Calu3 (cell line): ENCODE measurements at regions of chr3 and their contacts with region 1.

Region 1: DNA sequence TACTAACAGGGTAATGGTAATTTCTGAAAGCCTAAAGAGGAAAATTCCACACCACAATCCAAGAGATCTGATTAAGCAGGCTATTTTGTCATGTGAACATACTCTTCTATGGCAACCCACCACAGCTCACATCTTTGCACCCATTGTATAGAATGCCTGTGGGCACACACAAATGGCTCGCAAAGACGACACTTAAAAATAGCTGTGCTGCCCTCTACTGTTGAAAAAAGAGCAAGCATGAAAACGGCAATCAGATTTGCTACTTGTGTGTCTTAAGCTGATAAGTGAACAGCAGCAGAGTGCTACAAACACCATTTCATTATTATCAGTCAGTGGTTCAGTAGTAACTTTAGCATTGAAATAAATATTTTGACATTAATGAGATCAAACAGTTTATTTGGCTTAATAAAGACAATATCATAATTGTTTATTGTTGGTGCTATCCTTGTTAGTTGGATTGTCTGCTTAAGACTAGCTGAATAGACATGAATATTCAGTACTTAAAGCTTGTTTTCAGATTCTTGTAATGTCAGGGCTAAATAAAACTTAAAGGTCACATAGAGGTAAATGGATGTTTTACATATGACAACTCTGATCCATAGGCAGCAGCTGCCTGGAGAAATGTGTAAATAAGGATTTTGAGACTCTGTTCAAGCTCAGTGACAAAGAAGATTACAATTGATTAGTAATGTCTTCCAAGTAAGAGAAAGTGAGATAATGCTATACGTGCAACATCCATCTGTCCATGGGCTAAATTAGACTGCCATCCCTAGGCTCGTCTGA is 199.1 kb downstream of the LRRN1 start:
- DNase-seq: peak; percentile 38
- H3K4me3 Mint-ChIP-seq: no peak overlapping the region
- H3K27ac Mint-ChIP-seq: no peak overlapping the region
- H3K4me1 Mint-ChIP-seq: no peaks in the 10 kb centered on the region
- H3K27me3 Mint-ChIP-seq: no peaks in the 10 kb centered on the region
- CTCF ChIP-seq: peak; percentile 23

Region 2: DNA sequence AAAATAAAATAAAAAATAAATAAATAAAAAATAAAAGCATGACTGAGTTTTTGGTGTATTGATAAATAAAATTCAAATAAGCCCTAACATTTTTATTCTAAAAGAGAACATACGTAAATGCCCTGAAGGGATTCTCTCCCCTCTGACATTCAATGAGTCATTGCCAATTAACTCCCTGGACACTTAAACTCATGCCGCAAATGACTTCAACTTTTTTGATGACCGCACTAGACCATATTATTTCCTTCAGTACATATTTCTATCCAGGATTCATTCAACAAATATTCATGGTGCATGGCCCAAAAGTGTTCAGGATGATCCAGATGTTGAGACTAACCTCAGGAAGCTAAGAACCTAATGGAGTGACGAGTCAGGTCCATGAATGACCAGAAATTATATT is 395.0 kb before region 1 on chr3:
- CTCF ChIA-PET with region 1: interaction called, 12 read pairs
- intact Hi-C with region 1: loop called (anchors 1 kb)
- DNase-seq: no peak
- H3K4me3 Mint-ChIP-seq: no peak overlapping the region
- H3K27ac Mint-ChIP-seq: no peak overlapping the region
- H3K4me1 Mint-ChIP-seq: peaks cover 8% of the 10 kb centered on the region
- H3K27me3 Mint-ChIP-seq: no peaks in the 10 kb centered on the region
- CTCF ChIP-seq: no peak

Region 3: GRCh38 chr3:3739330-3740060 is 258.8 kb before region 1 on chr3:
- CTCF ChIA-PET with region 1: no interaction called
- intact Hi-C with region 1: loop called (anchors 10 kb)
- DNase-seq: no peak
- H3K4me3 Mint-ChIP-seq: no peak overlapping the region
- H3K27ac Mint-ChIP-seq: no peak overlapping the region
- H3K4me1 Mint-ChIP-seq: no peaks in the 10 kb centered on the region
- H3K27me3 Mint-ChIP-seq: no peaks in the 10 kb centered on the region
- CTCF ChIP-seq: no peak

Region 4: GRCh38 chr3:3860235-3860634 is 138.1 kb before region 1 on chr3:
- CTCF ChIA-PET with region 1: no interaction called
- intact Hi-C with region 1: no loop called
- DNase-seq: no peak
- H3K4me3 Mint-ChIP-seq: no peak overlapping the region
- H3K27ac Mint-ChIP-seq: no peak overlapping the region
- H3K4me1 Mint-ChIP-seq: peaks cover 8% of the 10 kb centered on the region
- H3K27me3 Mint-ChIP-seq: no peaks in the 10 kb centered on the region
- CTCF ChIP-seq: no peak

Region 5: DNA sequence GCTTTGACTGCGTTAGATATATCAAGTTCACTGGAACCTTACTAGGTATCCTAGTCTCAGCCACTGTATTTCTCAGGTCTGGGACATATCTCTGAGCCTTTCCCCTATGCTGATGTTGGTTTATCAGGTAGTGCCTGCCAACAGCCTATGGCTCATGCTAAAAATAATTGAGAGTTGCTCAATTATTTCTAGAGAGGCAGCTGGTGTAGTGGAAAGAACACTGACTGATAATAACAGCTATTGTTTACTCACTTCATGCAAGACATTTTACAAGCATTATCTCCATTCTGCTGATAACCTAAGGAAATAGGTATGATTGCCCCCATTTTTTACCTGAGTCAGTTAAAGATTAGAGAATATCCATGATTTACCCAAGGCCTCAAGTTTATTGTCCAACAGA is 32.3 kb after region 1 on chr3:
- CTCF ChIA-PET with region 1: no interaction called
- intact Hi-C with region 1: no loop called
- DNase-seq: no peak
- H3K4me3 Mint-ChIP-seq: no peak overlapping the region
- H3K27ac Mint-ChIP-seq: no peak overlapping the region
- H3K4me1 Mint-ChIP-seq: no peaks in the 10 kb centered on the region
- H3K27me3 Mint-ChIP-seq: no peaks in the 10 kb centered on the region
- CTCF ChIP-seq: no peak

Region 6: GRCh38 chr3:4271834-4272233 is 273.5 kb after region 1 on chr3:
- CTCF ChIA-PET with region 1: no interaction called
- intact Hi-C with region 1: loop called (anchors 10 kb)
- DNase-seq: peak; percentile 6
- H3K4me3 Mint-ChIP-seq: no peak overlapping the region
- H3K27ac Mint-ChIP-seq: no peak overlapping the region
- H3K4me1 Mint-ChIP-seq: no peaks in the 10 kb centered on the region
- H3K27me3 Mint-ChIP-seq: peaks cover 14% of the 10 kb centered on the region
- CTCF ChIP-seq: no peak